HEK293 (cell line): ENCODE measurements at regions of chr6 and their contacts with region 1.

Region 1: DNA sequence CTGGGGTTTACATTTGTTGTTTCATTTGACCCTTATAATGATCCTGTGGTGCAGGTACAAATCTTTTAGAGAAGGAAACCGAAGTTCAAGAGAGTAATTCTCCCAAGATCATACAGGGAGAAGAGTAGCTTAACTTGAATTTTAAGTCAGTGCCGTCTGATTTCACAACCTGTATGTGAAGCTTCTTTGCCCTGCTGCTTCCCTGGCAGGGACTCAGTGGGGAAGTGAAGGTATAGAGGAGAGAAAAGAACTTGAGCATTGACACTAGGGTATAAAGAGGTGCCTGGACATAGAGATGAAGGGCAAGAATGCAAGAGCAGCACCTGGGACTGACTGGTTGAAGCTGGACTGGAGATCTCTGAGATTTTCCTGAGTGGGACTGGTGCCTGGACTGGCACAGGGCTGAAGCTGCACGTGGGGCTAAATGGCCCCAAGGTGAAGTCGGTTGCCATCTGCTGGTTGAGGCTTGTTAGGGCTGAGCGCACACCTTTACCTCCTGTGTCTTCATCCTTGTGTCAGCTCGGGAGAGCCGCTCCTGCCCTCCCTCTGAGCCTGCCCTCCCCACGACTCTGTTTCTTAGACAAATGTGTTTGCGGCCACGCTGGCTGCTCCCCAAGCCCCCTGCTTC is 41.8 kb downstream of the FARS2 start:
- H3K4me3 ChIP-seq: no peak overlapping the region
- H3K27ac ChIP-seq: no peak overlapping the region
- H3K4me1 ChIP-seq: peaks cover 17% of the 10 kb centered on the region
- CTCF ChIP-seq: peak; percentile 76; the same call in 1 of the 2 replicates

Region 2: DNA sequence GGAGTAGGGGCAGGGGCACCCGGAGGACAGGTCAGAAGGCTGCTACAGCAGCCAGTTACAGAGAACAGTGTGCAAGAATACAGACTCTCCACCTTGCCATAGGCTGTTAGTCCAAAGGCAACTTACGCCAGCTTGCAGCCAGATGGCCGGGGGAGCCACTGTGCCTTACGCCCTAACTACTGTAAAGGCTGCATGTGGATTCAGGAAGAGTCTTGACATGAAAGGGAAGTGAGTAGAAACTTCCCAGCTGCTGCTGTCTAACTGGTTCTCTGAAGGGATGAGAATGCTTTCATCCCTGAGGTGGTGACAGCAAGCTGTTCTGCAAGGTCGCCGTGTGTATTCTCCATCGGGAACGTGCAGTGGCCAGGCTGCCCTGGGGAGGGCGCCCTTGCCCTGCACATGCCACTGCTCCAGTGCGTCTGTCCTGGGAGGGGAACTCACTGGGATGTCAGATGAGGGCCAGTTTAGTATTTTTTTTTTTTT is 88.5 kb before region 1 on chr6:
- CTCF ChIA-PET with region 1: interaction called, 30 read pairs
- POLR2A ChIA-PET with region 1: no interaction called
- H3K4me3 ChIP-seq: no peak overlapping the region
- H3K27ac ChIP-seq: no peak overlapping the region
- H3K4me1 ChIP-seq: no peaks in the 10 kb centered on the region
- CTCF ChIP-seq: peak; percentile 77

Region 3: GRCh38 chr6:5266423-5266822 is 36.7 kb before region 1 on chr6:
- CTCF ChIA-PET with region 1: interaction called, 19 read pairs
- POLR2A ChIA-PET with region 1: no interaction called
- H3K4me3 ChIP-seq: no peak overlapping the region
- H3K27ac ChIP-seq: no peak overlapping the region
- H3K4me1 ChIP-seq: peaks cover 5% of the 10 kb centered on the region
- CTCF ChIP-seq: no peak

Region 4: GRCh38 chr6:5292154-5292553 is 11.0 kb before region 1 on chr6:
- CTCF ChIA-PET with region 1: interaction called, 12 read pairs
- POLR2A ChIA-PET with region 1: no interaction called
- H3K4me3 ChIP-seq: no peak overlapping the region
- H3K27ac ChIP-seq: no peak overlapping the region
- H3K4me1 ChIP-seq: peaks cover 12% of the 10 kb centered on the region
- CTCF ChIP-seq: no peak

Region 5: DNA sequence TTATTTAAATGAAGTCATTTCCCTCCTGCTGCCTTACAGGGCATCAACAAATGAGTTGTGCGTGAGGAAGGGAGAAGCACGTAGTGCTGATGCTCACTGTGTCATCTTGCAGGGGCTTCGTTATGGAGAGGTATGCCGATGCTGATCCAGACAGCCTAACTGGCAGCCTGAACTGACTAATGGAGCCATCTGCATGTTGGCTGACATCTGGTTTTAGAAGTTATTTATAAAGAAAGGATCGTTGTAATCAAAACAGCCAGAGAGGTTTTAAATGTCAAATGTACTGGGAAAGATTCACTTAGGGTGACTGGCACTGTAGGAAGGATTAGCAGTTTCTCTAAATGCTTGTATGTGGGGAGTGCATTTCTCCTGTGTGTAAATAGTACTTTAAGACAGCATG is 12.8 kb after region 1 on chr6:
- CTCF ChIA-PET with region 1: interaction called, 15 read pairs
- POLR2A ChIA-PET with region 1: no interaction called
- H3K4me3 ChIP-seq: no peak overlapping the region
- H3K27ac ChIP-seq: no peak overlapping the region
- H3K4me1 ChIP-seq: peaks cover 40% of the 10 kb centered on the region
- CTCF ChIP-seq: no peak